H1 (cell line): ENCODE measurements at regions of chr2 and their contacts with region 1.

Region 1: GRCh38 chr2:97740590-97741182 is 27.3 kb downstream of the ZAP70 start:
- DNase-seq: peak in 1 of 2 experiments; percentile 87
- H3K4me3 ChIP-seq: no peak overlapping the region
- H3K27ac ChIP-seq: no peak overlapping the region
- H3K4me1 ChIP-seq: peaks cover 0 to 2% (median 0%) of the 10 kb centered on the region in 4 experiments; a peak in 1 of 7 replicates
- H3K27me3 ChIP-seq: no peaks in the 10 kb centered on the region
- CTCF ChIP-seq: peak in 2 of 3 experiments; percentile 79 to 92; a peak in 3 of 4 replicates
- EP300 ChIP-seq: no peak
- POLR2A ChIP-seq: no peak
- RAD21 ChIP-seq: peak; percentile 67 to 68

Region 2: DNA sequence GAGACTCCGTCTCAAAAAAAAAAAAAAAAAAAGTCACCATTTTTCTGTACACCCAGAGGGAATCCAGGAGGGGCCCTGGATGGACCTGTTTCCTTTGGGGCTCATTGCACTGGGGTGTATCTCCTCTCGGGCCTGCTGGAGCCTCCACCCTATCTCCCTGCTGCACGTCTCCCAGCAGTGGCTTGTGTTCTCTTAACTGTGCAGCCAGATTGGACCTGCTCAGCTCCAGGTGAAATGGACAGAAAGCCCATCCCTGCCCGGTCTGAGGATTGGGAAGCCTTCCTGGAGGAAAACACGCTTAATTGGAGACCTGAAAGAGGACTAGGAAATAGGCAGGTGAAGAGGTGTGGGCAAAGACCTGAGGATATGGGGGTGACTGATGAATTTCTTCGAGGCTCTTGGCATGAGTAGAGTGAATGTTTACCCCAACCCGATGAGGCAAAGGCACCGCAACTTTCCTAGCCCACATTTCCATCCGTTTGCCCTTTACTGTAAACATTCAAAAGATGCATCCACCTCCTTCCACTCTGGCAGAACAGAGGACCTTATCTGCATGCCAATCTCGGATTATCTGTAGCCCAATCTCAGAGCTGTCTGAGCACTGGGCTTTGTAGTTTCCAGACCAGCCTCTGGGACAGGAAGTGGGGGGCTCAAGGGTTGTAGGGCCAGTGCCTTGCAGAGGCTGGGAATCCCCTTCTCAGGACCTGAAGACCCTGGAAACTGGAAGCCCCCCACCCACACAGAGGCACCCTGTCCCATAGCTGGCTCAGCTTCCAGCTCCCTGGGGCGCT is 29.9 kb before region 1 on chr2:
- CTCF ChIA-PET with region 1: interaction called, 65 read pairs
- POLR2A ChIA-PET with region 1: interaction called, 3 read pairs
- DNase-seq: no peak
- H3K4me3 ChIP-seq: no peak overlapping the region
- H3K27ac ChIP-seq: no peak overlapping the region
- H3K4me1 ChIP-seq: peaks cover 0 to 3% (median 0%) of the 10 kb centered on the region in 4 experiments; a peak in 3 of 7 replicates
- H3K27me3 ChIP-seq: no peaks in the 10 kb centered on the region
- CTCF ChIP-seq: no peak
- EP300 ChIP-seq: no peak
- POLR2A ChIP-seq: no peak
- RAD21 ChIP-seq: no peak

Region 3: DNA sequence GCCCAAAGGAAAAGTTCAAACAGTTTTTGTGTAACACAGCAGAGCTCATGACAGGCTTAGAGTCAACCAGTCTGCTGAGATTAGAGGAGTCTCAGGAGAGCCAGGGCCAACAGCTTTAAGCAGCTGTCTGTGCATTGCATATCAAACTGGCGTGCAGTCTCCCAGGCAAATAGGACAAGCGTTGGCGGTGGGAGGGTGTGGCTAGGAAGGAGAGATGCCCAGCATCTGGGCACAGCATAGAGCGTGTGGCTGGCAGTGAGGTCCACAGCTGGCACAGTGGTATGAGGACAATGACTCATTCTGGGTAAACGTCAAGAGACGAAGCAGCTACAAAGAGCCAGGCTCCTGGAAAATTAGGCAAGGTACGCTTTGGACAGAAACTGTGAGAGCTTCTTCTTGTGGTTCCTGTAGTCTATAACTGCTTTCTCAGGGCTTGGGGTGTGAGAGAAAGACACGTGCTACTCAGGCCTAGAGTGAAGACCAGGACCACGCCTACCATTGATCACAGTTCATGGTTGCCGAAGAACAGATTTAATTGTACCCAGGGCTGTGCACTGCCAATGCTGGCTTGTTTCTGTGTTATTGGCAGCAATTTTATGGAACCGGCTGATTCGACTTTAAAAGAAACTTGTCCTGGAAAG is 12.5 kb before region 1 on chr2:
- CTCF ChIA-PET with region 1: interaction called, 105 read pairs
- POLR2A ChIA-PET with region 1: interaction called, 3 read pairs
- DNase-seq: no peak
- H3K4me3 ChIP-seq: no peak overlapping the region
- H3K27ac ChIP-seq: no peak overlapping the region
- H3K4me1 ChIP-seq: no peaks in the 10 kb centered on the region; a peak in 1 of 7 replicates
- H3K27me3 ChIP-seq: no peaks in the 10 kb centered on the region
- CTCF ChIP-seq: no peak
- EP300 ChIP-seq: no peak
- POLR2A ChIP-seq: no peak
- RAD21 ChIP-seq: no peak

Region 4: DNA sequence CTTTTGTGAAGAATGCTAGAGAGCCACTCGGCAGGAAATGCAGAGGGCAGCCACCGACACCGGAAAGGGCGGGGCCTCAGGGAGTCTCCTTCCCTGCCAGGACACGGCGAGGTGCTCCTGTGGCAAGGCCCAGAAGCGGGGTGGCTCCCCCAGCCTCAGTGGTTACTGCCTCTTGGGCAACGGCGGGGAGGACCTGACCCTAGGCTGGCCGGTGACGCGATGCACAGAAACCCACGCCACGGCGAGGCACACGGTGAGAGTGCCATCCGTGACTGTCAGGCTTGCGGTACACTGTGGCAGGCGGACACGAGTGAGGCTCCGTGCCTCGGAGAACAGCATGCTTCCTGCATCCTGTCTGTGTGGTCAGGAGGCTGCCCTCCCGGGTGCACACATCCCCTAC is 20.5 kb after region 1 on chr2:
- CTCF ChIA-PET with region 1: interaction called, 16 read pairs
- POLR2A ChIA-PET with region 1: no interaction called
- DNase-seq: no peak
- H3K4me3 ChIP-seq: no peak overlapping the region
- H3K27ac ChIP-seq: no peak overlapping the region
- H3K4me1 ChIP-seq: no peaks in the 10 kb centered on the region; a peak in 1 of 7 replicates
- H3K27me3 ChIP-seq: no peaks in the 10 kb centered on the region; a peak in 1 of 7 replicates
- CTCF ChIP-seq: no peak
- EP300 ChIP-seq: no peak
- POLR2A ChIP-seq: no peak
- RAD21 ChIP-seq: no peak

Region 5: GRCh38 chr2:97774425-97774824 is 33.7 kb after region 1 on chr2:
- CTCF ChIA-PET with region 1: interaction called, 23 read pairs
- POLR2A ChIA-PET with region 1: no interaction called
- DNase-seq: no peak
- H3K4me3 ChIP-seq: no peak overlapping the region
- H3K27ac ChIP-seq: no peak overlapping the region
- H3K4me1 ChIP-seq: peaks cover 0 to 11% (median 0%) of the 10 kb centered on the region in 4 experiments; a peak in 2 of 7 replicates
- H3K27me3 ChIP-seq: no peaks in the 10 kb centered on the region
- CTCF ChIP-seq: peak; percentile 51 to 80 (median 69)
- EP300 ChIP-seq: no peak
- POLR2A ChIP-seq: no peak
- RAD21 ChIP-seq: peak; percentile 52 to 61; a peak in 3 of 4 replicates

Region 6: GRCh38 chr2:97935719-97936161 is 195.1 kb after region 1 on chr2:
- CTCF ChIA-PET with region 1: no interaction called
- POLR2A ChIA-PET with region 1: no interaction called
- DNase-seq: no peak
- H3K4me3 ChIP-seq: peak overlapping the region in 1 of 4 experiments; percentile 23; a peak in 1 of 8 replicates
- H3K27ac ChIP-seq: no peak overlapping the region
- H3K4me1 ChIP-seq: peaks cover 0 to 5% (median 2%) of the 10 kb centered on the region in 4 experiments; a peak in 4 of 7 replicates
- H3K27me3 ChIP-seq: no peaks in the 10 kb centered on the region
- CTCF ChIP-seq: no peak
- EP300 ChIP-seq: no peak
- POLR2A ChIP-seq: no peak
- RAD21 ChIP-seq: no peak